Vagina (tissue), 2 donors: ENCODE measurements at regions of chr1 and their contacts with region 1.

Region 1: DNA sequence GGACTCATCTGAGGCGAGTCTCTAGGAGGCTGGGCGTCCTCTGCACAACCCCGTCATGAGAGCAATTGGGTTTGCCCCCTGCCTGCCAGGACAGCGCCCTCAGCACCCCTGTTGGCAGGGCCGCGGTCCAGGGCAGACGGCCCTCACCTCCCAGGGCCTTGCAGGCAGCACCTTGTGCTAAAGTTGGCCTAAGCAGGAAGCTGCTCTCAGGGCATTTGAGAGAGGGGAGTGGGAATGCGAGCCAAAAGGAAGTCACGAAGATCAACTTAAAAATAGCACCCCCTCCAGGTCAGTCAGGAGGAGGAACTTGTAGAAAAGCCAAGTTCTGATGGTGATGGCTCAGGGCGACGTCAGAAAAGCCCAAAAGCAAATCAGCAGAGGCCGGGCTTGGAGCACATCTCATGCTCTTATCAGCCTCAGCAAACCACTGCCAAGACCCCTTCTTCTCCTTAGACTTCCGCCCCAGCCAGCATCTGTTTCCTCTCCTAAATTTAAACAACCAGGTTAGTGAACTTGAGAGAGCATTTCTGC is 12.6 kb upstream of the ADORA3 start:
- DNase-seq: no peak
- H3K4me3 ChIP-seq: peak overlapping the region; percentile 33 to 45
- H3K27ac ChIP-seq: peak overlapping the region; percentile 67
- H3K4me1 ChIP-seq: peaks cover 36% of the 10 kb centered on the region
- H3K27me3 ChIP-seq: no peaks in the 10 kb centered on the region
- CTCF ChIP-seq: no peak
- POLR2A ChIP-seq: no peak

Region 2: DNA sequence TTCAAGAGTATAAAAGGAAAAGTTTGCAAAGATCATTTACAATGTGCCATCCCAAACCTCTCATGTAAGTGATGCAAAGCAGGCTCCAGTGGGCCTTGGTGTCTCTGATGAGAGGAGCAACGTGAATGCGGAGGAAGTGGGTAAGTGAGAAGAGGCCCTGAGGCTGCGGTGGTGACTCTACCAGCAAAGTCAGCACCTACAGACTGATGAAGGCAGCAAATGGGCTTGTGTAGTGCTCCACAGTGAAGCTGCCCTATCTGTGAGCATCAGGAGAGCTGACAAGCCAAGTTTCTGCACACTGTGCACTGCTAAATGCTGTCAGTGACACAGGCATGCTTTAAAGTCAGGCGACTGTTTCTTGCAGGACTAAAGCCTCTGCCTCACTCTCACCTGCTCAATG is 87.9 kb after region 1 on chr1:
- intact Hi-C with region 1: loop called (anchors 10 kb)
- DNase-seq: no peak
- H3K4me3 ChIP-seq: no peak overlapping the region
- H3K27ac ChIP-seq: no peak overlapping the region
- H3K4me1 ChIP-seq: peaks cover 8% of the 10 kb centered on the region
- H3K27me3 ChIP-seq: no peaks in the 10 kb centered on the region
- CTCF ChIP-seq: no peak
- POLR2A ChIP-seq: no peak

Region 3: GRCh38 chr1:111654839-111655238 is 138.8 kb after region 1 on chr1:
- intact Hi-C with region 1: loop called (anchors 5 kb)
- DNase-seq: no peak
- H3K4me3 ChIP-seq: no peak overlapping the region
- H3K27ac ChIP-seq: no peak overlapping the region
- H3K4me1 ChIP-seq: peaks cover 32% of the 10 kb centered on the region
- H3K27me3 ChIP-seq: no peaks in the 10 kb centered on the region
- CTCF ChIP-seq: no peak
- POLR2A ChIP-seq: no peak